ENCODE measurements at regions of chr6 and their contacts with region 1.

Region 1: GRCh38 chr6:45930420-45931040 is 85.1 kb downstream of the CLIC5 start:
- DNase-seq: peak; percentile 72
- H3K4me3 Mint-ChIP-seq: no peak overlapping the region
- H3K27ac Mint-ChIP-seq: no peak overlapping the region
- H3K4me1 Mint-ChIP-seq: no peaks in the 10 kb centered on the region
- H3K27me3 Mint-ChIP-seq: peaks cover 4% of the 10 kb centered on the region

Region 2: GRCh38 chr6:45942953-45943352 is 12.4 kb after region 1 on chr6:
- CTCF ChIA-PET with region 1: interaction called, 17 read pairs
- intact Hi-C with region 1: no loop called
- DNase-seq: no peak
- H3K4me3 Mint-ChIP-seq: no peak overlapping the region
- H3K27ac Mint-ChIP-seq: no peak overlapping the region
- H3K4me1 Mint-ChIP-seq: no peaks in the 10 kb centered on the region
- H3K27me3 Mint-ChIP-seq: no peaks in the 10 kb centered on the region

Region 3: GRCh38 chr6:46129629-46130511 is 199.3 kb after region 1 on chr6 and contains the start of gene ENPP4:
- CTCF ChIA-PET with region 1: no interaction called
- intact Hi-C with region 1: loop called (anchors 1 kb)
- DNase-seq: peak; percentile 91
- H3K4me3 Mint-ChIP-seq: peak within 1 kb of the TSS; percentile 92
- H3K27ac Mint-ChIP-seq: peak within 1 kb of the TSS; percentile 77
- H3K4me1 Mint-ChIP-seq: peaks cover 27% of the 10 kb centered on the region
- H3K27me3 Mint-ChIP-seq: no peaks in the 10 kb centered on the region
- total RNA-seq, gene ENPP4: 7.7 to 8.0 TPM

Region 4: GRCh38 chr6:46410334-46410953 is 479.9 kb after region 1 on chr6:
- CTCF ChIA-PET with region 1: interaction called, 22 read pairs
- intact Hi-C with region 1: loop called (anchors 1 kb)
- DNase-seq: peak; percentile 53
- H3K4me3 Mint-ChIP-seq: no peak overlapping the region
- H3K27ac Mint-ChIP-seq: no peak overlapping the region
- H3K4me1 Mint-ChIP-seq: no peaks in the 10 kb centered on the region
- H3K27me3 Mint-ChIP-seq: no peaks in the 10 kb centered on the region

Measured in activated naive CD4-positive, alpha-beta T cell treated with anti-CD3 and anti-CD28 coated beads for 36 hours (primary cell).